Mammary epithelial cell (primary cell): ENCODE measurements at regions of chr17 and their contacts with region 1.

Region 1: DNA sequence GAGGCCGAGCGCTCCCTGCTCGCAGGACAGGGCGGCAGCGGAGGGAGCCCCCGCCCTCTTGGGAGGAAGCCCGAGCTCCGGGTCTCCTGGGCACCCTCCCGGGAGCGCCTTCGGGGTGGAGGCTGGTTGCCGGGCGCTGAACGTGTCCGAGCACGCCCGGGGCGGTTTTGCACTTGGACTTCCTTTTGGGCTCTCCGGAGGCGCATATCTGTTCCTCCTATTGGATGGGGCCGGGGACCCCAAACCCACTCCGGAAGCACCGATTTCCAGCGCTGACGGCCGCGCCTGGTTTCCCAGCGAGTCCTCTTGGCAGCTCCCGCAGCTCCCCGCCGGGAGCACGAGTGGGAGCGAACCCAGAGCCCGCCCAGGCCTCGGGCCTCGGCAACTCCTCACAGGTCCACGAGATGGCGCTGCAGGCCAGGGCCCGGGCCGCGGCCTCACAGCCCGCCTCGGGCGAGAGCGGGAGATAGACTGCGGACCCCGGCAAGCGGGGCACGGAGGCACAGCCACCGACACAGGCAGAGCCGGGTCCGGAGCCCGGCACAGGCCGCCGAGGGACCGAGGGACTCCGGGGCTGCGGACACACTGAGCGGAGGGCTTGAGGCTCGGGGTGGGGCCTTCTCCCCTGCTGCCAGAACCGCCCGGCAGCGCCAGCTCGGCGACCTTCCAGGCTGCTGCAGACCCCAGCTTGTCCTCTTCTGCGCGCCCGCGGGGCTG is 12.7 kb downstream of the TBX2 start:
- DNase-seq: peak; percentile 81
- H3K4me3 ChIP-seq: peak overlapping the region; percentile 53 to 75 (median 71)
- H3K27ac ChIP-seq: peak overlapping the region; percentile 2
- H3K4me1 ChIP-seq: peaks cover 17% of the 10 kb centered on the region
- H3K27me3 ChIP-seq: no peaks in the 10 kb centered on the region
- CTCF ChIP-seq: peak; percentile 68 to 98

Region 2: DNA sequence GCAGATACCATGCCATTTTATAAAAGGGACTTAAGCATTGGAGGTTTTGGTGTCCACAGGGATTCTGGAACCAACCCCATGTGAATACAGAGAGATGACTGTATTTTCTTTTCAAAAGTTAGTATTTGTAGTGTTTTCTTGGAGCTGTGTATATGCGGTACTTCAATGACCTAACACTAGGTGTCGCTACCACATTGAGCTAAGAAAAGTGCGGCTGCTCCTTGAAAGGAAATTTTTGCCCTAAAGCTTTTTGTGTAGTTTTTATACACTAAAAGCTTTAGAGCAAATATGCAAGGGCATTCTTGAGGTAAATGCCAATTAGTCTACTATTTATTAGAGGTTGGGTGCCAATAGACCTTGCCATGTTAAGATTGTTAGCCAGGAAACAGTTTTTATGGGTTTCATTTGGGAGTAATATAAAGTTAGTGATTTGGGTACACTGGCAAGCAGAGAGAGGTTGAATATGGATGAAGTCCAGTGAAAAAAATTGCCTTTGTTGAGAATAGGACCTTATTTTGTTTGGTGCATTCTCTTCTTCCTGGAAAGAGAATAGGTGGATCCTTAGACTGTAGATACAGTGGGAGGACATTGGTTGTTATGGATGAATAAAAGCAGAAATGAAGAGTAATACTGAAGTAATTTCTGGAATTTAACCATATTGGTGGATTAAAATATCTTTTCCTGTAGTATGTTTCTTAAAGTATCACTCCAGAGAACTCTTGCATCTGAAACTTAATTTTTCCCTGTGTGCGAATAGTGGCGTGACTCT is 691.4 kb before region 1 on chr17:
- CTCF ChIA-PET with region 1: interaction called, 3 read pairs
- dilution Hi-C with region 1: no loop called
- in situ Hi-C with region 1: loop called (anchors 10 to 25 kb)
- intact Hi-C with region 1: loop called (anchors 1 kb)
- DNase-seq: peak; percentile 35
- H3K4me3 ChIP-seq: no peak overlapping the region
- H3K27ac ChIP-seq: no peak overlapping the region
- H3K4me1 ChIP-seq: no peaks in the 10 kb centered on the region
- H3K27me3 ChIP-seq: no peaks in the 10 kb centered on the region
- CTCF ChIP-seq: peak; percentile 81 to 87

Region 3: GRCh38 chr17:61002316-61002736 is 410.0 kb before region 1 on chr17:
- CTCF ChIA-PET with region 1: no interaction called
- dilution Hi-C with region 1: no loop called
- in situ Hi-C with region 1: no loop called
- intact Hi-C with region 1: loop called (anchors 1 kb)
- DNase-seq: peak; percentile 12
- H3K4me3 ChIP-seq: no peak overlapping the region
- H3K27ac ChIP-seq: no peak overlapping the region
- H3K4me1 ChIP-seq: no peaks in the 10 kb centered on the region
- H3K27me3 ChIP-seq: no peaks in the 10 kb centered on the region
- CTCF ChIP-seq: peak; percentile 32 to 52

Region 4: GRCh38 chr17:61490540-61491412 is 78.5 kb after region 1 on chr17:
- CTCF ChIA-PET with region 1: no interaction called
- dilution Hi-C with region 1: no loop called
- in situ Hi-C with region 1: no loop called
- intact Hi-C with region 1: loop called (anchors 5 kb)
- DNase-seq: peak; percentile 89
- H3K4me3 ChIP-seq: no peak overlapping the region
- H3K27ac ChIP-seq: no peak overlapping the region
- H3K4me1 ChIP-seq: peaks cover 12% of the 10 kb centered on the region
- H3K27me3 ChIP-seq: no peaks in the 10 kb centered on the region
- CTCF ChIP-seq: no peak

Region 5: DNA sequence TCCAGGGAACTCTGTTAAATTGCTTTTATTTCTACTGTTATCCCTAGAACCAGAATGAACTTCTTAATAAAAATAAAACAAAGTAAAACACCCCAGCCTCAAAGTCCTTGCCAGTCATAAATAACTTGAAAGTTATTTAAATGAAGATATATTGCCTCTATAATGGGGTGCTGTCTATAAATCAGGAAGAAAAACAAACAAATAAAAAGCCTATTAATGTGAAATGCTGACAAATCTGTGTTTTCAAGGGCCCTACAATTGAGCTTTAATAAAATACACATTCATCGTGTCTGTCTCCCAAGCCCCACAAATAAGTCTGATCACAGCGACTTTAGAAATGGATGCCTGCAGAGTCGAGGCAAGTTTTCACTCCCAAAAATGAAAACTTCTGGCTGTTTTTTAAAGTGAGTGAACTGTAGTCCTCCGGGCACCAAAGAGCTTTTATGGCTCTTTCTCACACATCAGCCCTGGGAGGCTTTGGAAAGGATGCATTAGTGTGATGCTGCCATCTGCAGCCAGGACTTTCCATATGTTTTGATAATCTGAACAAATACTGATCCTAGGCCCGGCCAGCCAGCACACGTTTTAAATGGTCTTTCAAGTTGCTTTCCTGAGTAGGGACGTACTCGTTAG is 162.4 kb after region 1 on chr17:
- CTCF ChIA-PET with region 1: interaction called, 6 read pairs
- dilution Hi-C with region 1: no loop called
- in situ Hi-C with region 1: no loop called
- intact Hi-C with region 1: loop called (anchors 1 kb)
- DNase-seq: peak; percentile 57
- H3K4me3 ChIP-seq: no peak overlapping the region
- H3K27ac ChIP-seq: no peak overlapping the region
- H3K4me1 ChIP-seq: no peaks in the 10 kb centered on the region
- H3K27me3 ChIP-seq: peaks cover 2% of the 10 kb centered on the region
- CTCF ChIP-seq: peak; percentile 29 to 45

Region 6: GRCh38 chr17:61635913-61636432 is 223.7 kb after region 1 on chr17:
- CTCF ChIA-PET with region 1: no interaction called
- dilution Hi-C with region 1: no loop called
- in situ Hi-C with region 1: no loop called
- intact Hi-C with region 1: loop called (anchors 2 kb)
- DNase-seq: peak; percentile 35
- H3K4me3 ChIP-seq: no peak overlapping the region
- H3K27ac ChIP-seq: no peak overlapping the region
- H3K4me1 ChIP-seq: no peaks in the 10 kb centered on the region
- H3K27me3 ChIP-seq: no peaks in the 10 kb centered on the region
- CTCF ChIP-seq: peak; percentile 74 to 81

Region 7: DNA sequence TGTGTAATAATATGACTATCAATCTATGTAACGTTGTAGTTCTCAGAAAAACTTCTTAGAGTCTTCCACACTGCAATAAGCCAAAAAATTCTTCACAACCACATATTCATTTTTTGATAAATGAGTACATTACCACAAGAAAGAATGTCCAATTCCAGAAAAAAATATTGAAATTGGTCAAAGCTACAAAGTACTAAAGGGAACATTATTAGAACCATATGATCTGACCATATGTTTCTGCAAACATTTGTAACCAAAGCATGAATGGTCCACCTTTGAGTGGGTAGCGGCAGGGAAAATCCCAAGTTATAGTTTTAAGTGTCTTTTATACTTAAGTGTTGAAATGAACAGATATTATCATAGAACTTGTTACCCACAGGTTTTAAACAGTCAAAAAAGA is 250.4 kb after region 1 on chr17:
- CTCF ChIA-PET with region 1: no interaction called
- dilution Hi-C with region 1: no loop called
- in situ Hi-C with region 1: no loop called
- intact Hi-C with region 1: no loop called
- DNase-seq: no peak
- H3K4me3 ChIP-seq: no peak overlapping the region
- H3K27ac ChIP-seq: no peak overlapping the region
- H3K4me1 ChIP-seq: no peaks in the 10 kb centered on the region
- H3K27me3 ChIP-seq: no peaks in the 10 kb centered on the region
- CTCF ChIP-seq: no peak

Region 8: DNA sequence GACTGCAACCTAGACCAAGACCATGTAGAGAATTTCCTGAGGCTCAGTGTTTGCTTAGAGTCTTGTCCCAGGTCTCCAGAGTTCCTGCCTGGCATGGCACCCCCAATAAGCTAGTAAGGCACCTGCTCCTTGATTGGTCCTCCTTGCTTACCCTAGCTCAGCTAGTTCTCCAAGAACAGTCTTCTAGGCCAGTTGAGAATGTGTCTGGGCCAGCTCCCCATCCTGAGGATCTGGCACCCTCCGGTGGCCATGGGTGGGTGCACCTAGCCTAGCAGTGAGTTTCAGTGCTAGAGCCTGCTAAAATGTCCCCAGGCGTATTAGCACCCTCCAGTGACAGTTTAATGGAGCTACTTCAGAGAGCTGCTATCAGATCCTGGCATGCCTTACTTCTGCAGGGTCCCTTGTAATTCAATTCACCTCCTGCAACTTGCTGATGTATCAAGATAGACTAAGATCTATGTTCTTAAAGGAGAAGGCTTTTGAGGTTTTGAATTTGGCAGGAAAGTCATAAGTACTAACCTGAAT is 697.1 kb after region 1 on chr17:
- CTCF ChIA-PET with region 1: no interaction called
- dilution Hi-C with region 1: no loop called
- in situ Hi-C with region 1: no loop called
- intact Hi-C with region 1: loop called (anchors 1 kb)
- DNase-seq: peak; percentile 82
- H3K4me3 ChIP-seq: no peak overlapping the region
- H3K27ac ChIP-seq: no peak overlapping the region
- H3K4me1 ChIP-seq: no peaks in the 10 kb centered on the region
- H3K27me3 ChIP-seq: no peaks in the 10 kb centered on the region
- CTCF ChIP-seq: peak; percentile 94 to 96